Sciatic nerve (tissue), 2 donors: ENCODE measurements at regions of chr21 and their contacts with region 1.

Region 1: GRCh38 chr21:39715804-39716397 is 29.1 kb upstream of the IGSF5 start:
- DNase-seq: peak; percentile 72
- ATAC-seq: peak; percentile 22

Region 2: GRCh38 chr21:39518138-39518846 is 197.6 kb before region 1 on chr21:
- intact Hi-C with region 1: loop called (anchors 5 kb)
- DNase-seq: no peak
- ATAC-seq: peak; percentile 76

Region 3: DNA sequence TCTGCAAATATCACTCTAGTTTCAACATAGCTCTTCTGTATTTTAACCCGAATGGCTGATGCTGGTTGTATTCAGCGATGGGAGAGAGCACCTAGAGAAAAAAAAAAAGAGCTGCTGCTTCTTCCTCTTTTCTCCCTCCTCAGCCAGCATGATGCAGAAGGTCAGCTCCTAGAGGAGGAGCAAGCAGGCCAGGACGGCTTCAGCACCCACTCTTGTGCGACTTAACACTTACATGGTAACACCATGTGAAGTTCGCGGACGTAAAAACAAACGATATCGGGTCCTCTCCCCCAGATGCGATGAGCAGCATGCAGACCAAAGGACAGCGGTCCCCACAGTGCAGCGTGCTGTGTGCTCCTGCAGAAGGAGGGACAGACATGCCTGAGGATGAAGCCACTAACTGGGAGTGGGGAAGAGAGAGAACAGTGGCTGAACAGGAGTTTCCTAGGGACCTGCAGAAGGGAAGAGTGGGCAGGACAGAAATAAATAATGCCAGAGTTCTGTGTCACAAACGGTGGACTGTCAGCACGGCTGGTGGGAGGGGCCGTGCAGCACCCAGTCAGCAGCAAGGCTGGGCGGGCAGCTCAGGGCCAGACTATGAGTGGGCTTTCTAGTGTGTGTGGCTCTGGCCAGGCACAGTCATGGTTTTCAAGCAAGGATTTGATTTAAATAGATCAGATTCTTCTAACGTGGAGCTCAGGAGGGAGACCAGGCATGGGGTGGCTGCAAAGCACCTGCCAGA is 114.5 kb before region 1 on chr21:
- intact Hi-C with region 1: no loop called
- DNase-seq: no peak
- ATAC-seq: peak; percentile 41